H1 (cell line): ENCODE measurements at regions of chr15 and their contacts with region 1.

Region 1: GRCh38 chr15:78308422-78309032 is 9.1 kb upstream of the SKIC8 start:
- DNase-seq: peak; percentile 57 to 94
- H3K4me3 ChIP-seq: no peak overlapping the region
- H3K27ac ChIP-seq: no peak overlapping the region
- H3K4me1 ChIP-seq: peaks cover 0 to 9% (median 2%) of the 10 kb centered on the region in 4 experiments; a peak in 5 of 7 replicates
- H3K27me3 ChIP-seq: no peaks in the 10 kb centered on the region
- CTCF ChIP-seq: peak; percentile 98 to 99 (median 99)
- EP300 ChIP-seq: no peak; a peak in 1 of 3 replicates
- POLR2A ChIP-seq: no peak
- RAD21 ChIP-seq: peak; percentile 100

Region 2: DNA sequence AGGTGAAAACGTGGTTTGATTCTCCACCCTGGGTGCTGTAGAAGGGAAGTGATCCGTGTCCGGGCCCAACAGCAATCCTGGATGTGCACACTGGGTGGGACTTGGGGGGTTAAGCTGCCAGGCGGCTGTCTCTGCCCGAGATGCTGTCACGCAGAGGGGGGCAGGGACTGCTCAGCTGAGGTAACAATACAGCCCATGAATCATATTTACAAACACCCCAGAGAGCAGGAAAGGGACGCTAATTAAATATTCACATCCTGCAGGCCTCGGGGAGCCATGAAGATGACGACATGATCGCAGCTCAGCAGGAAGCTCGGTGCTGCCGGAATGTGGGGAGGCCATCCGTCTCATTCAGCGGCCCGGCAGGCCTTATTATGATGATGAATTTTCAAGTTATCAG is 13.7 kb after region 1 on chr15:
- CTCF ChIA-PET with region 1: interaction called, 42 read pairs
- POLR2A ChIA-PET with region 1: no interaction called
- DNase-seq: no peak
- H3K4me3 ChIP-seq: no peak overlapping the region
- H3K27ac ChIP-seq: peak overlapping the region; percentile 70
- H3K4me1 ChIP-seq: peaks cover 8 to 19% (median 14%) of the 10 kb centered on the region in 4 experiments
- H3K27me3 ChIP-seq: no peaks in the 10 kb centered on the region
- CTCF ChIP-seq: no peak
- EP300 ChIP-seq: no peak
- POLR2A ChIP-seq: no peak
- RAD21 ChIP-seq: no peak

Region 3: GRCh38 chr15:78353093-78353492 is 44.6 kb after region 1 on chr15:
- CTCF ChIA-PET with region 1: no interaction called
- POLR2A ChIA-PET with region 1: no interaction called
- DNase-seq: no peak
- H3K4me3 ChIP-seq: no peak overlapping the region
- H3K27ac ChIP-seq: no peak overlapping the region
- H3K4me1 ChIP-seq: peaks cover 0 to 3% (median 1%) of the 10 kb centered on the region in 4 experiments; a peak in 5 of 7 replicates
- H3K27me3 ChIP-seq: no peaks in the 10 kb centered on the region
- CTCF ChIP-seq: no peak
- EP300 ChIP-seq: no peak
- POLR2A ChIP-seq: no peak
- RAD21 ChIP-seq: no peak

Region 4: DNA sequence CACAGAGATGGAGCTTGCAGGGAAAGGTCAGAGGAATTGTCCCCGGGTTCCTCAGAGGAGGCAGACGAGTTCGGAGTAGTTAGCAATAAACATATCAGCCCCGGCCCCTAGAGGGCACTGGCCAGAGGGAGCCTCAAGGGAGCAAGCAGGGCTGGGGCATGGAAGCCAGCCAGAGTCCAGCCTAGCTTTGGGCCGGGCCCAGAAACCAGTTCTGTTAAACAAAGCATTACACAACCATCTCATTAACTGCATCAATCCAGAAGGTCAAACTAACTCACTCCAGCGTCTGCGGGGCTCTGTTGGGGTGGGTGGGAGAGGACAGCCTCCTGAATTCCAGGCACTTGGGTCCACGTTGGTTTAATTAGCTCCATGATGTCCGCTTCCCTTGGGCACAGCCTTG is 88.4 kb after region 1 on chr15:
- CTCF ChIA-PET with region 1: interaction called, 104 read pairs
- POLR2A ChIA-PET with region 1: interaction called, 3 read pairs
- DNase-seq: peak in 1 of 2 experiments; percentile 71
- H3K4me3 ChIP-seq: no peak overlapping the region
- H3K27ac ChIP-seq: no peak overlapping the region
- H3K4me1 ChIP-seq: peaks cover 4 to 31% (median 10%) of the 10 kb centered on the region in 4 experiments
- H3K27me3 ChIP-seq: peaks cover 0 to 2% (median 0%) of the 10 kb centered on the region in 4 experiments; a peak in 2 of 7 replicates
- CTCF ChIP-seq: peak; percentile 63 to 75 (median 66)
- EP300 ChIP-seq: no peak
- POLR2A ChIP-seq: no peak
- RAD21 ChIP-seq: peak; percentile 32 to 63

Region 5: DNA sequence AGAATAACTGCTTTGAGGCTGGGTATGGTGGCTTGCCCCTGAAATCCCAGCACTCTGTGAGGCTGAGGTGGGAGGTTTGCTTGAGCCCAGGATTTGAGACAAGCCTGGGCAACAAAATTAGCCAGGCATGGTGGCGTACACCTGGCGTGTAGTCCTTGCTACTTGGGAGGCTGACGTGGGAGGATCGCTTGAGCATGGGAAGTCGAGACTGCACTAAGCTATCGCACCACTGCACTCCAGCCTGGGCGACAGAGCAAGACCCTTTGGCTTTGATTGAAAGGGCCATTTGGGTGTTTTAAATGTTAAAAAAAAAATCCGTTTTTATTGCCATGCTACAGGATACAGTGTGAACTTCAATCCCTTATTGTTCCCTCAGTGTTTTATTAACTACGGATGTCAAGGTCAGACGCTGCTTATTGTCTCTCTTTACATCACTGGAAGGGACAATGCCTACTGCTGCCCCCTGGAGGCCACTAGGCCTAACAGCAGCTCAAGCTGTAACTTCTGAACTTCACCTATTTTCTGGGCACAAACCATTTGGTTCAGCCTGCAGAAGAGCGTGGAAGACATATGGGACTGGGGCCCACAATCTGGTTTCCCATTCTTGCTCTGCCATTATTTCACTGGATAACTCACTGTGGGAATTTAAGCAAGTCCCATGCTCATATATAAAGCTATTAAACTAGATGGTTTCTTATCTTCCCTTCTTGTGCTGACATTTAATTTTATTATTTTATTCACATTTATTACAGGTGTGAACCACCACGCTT is 114.2 kb after region 1 on chr15:
- CTCF ChIA-PET with region 1: interaction called, 173 read pairs
- POLR2A ChIA-PET with region 1: interaction called, 4 read pairs
- DNase-seq: peak; percentile 47 to 78
- H3K4me3 ChIP-seq: no peak overlapping the region
- H3K27ac ChIP-seq: no peak overlapping the region
- H3K4me1 ChIP-seq: no peaks in the 10 kb centered on the region
- H3K27me3 ChIP-seq: no peaks in the 10 kb centered on the region
- CTCF ChIP-seq: peak; percentile 80 to 96 (median 82)
- EP300 ChIP-seq: no peak
- POLR2A ChIP-seq: no peak
- RAD21 ChIP-seq: peak; percentile 69 to 80

Region 6: DNA sequence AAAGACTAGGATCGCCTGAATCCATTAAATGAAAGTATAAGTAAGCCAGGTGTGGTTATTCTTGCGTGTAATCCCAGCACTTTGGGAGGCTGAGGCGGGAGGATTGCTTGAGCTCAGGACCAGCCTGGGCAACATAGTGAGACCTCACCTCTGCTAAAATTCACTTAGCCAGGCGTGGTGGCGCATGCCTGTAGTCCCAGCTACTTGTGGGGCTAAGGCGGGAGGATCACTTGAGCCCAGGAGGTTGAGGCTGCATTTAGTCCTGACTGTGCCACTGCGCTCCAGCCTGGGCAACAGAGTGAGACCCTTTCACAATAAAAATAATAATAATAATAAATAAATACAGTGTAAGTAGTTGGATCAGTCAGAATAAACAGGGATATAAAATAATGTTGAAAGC is 173.4 kb after region 1 on chr15:
- CTCF ChIA-PET with region 1: interaction called, 21 read pairs
- POLR2A ChIA-PET with region 1: interaction called, 4 read pairs
- DNase-seq: no peak
- H3K4me3 ChIP-seq: no peak overlapping the region
- H3K27ac ChIP-seq: no peak overlapping the region
- H3K4me1 ChIP-seq: no peaks in the 10 kb centered on the region
- H3K27me3 ChIP-seq: no peaks in the 10 kb centered on the region
- CTCF ChIP-seq: no peak
- EP300 ChIP-seq: no peak
- POLR2A ChIP-seq: no peak
- RAD21 ChIP-seq: no peak